Naive thymus-derived CD4-positive, alpha-beta T cell (primary cell): ENCODE measurements at regions of chr11 and their contacts with region 1.

Region 1: DNA sequence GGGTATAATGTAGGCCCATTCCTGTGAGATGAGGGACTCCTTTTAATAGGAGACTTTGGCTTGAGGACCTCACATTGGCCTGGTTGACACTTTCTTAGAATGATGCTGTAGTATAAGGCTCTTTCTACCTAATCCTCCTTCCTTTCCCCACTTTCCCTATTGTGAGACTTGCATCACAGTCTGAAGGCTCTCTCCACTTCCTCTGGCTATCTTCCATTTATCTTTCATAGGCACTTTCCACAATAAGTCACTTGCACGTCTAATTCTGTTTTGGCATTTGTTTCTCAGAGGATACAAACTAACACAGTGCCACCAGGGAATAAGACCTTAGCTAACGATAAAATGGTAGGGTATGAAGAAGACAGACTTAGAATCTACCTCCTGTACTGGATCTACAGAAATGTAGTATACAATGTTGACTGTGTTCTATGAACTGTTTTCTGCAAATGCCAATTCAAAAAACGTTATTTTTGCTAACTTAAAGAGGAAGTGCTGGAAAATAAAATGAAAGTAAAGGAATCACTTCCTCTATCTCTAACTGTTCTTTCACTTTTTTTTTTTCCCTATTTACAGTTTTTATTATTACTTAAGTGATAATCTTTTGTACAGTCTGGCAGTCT is 17.9 kb upstream of the PDE3B start:
- DNase-seq: no peak
- ATAC-seq: peak; percentile 24
- H3K4me3 ChIP-seq: no peak overlapping the region
- H3K4me3 Mint-ChIP-seq: peak overlapping the region; percentile 1 to 75 (median 52)
- H3K27ac ChIP-seq: no peak overlapping the region
- H3K27ac Mint-ChIP-seq: peak overlapping the region; percentile 1 to 86 (median 71)
- H3K4me1 ChIP-seq: peaks cover 4 to 27% of the 10 kb centered on the region in 2 donors
- H3K4me1 Mint-ChIP-seq: peaks cover 26 to 69% (median 64%) of the 10 kb centered on the region in 7 donors
- H3K27me3 ChIP-seq: no peaks in the 10 kb centered on the region
- H3K27me3 Mint-ChIP-seq: no peaks in the 10 kb centered on the region

Region 2: DNA sequence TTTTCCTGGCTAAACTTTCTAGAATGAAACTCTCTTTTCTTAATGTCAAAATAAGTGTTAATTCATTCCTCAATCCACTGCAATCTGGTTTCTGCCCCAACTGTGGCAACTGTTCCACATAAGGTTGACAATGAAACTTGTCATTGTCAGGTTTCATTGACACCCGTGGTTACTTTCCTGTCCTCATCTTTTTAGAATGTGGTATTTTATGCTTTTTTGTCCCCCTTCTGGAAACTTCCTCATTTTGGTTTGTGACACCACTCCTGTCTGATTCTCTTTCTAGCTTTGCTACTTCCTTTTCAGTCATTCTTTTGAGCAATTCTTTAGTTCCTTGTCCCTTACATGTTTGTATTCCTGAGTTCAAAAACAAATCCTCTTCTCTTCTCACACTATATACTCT is 10.4 kb after region 1 on chr11:
- CTCF ChIA-PET with region 1: interaction called, 6 read pairs
- POLR2A ChIA-PET with region 1: interaction called, 15 read pairs
- intact Hi-C with region 1: loop called in 1 of 2 experiments (anchors 2 kb)
- DNase-seq: peak in 3 of 9 donors; percentile 14 to 45 (median 41)
- ATAC-seq: peak; percentile 56
- H3K4me3 ChIP-seq: no peak overlapping the region
- H3K4me3 Mint-ChIP-seq: peak overlapping the region; percentile 6 to 65 (median 51)
- H3K27ac ChIP-seq: no peak overlapping the region
- H3K27ac Mint-ChIP-seq: peak overlapping the region; percentile 26 to 93 (median 77)
- H3K4me1 ChIP-seq: peaks cover 39 to 57% of the 10 kb centered on the region in 2 donors
- H3K4me1 Mint-ChIP-seq: peaks cover 39 to 77% (median 66%) of the 10 kb centered on the region in 7 donors
- H3K27me3 ChIP-seq: no peaks in the 10 kb centered on the region
- H3K27me3 Mint-ChIP-seq: no peaks in the 10 kb centered on the region